ENCODE measurements at regions of chr13 and their contacts with region 1.

Region 1: DNA sequence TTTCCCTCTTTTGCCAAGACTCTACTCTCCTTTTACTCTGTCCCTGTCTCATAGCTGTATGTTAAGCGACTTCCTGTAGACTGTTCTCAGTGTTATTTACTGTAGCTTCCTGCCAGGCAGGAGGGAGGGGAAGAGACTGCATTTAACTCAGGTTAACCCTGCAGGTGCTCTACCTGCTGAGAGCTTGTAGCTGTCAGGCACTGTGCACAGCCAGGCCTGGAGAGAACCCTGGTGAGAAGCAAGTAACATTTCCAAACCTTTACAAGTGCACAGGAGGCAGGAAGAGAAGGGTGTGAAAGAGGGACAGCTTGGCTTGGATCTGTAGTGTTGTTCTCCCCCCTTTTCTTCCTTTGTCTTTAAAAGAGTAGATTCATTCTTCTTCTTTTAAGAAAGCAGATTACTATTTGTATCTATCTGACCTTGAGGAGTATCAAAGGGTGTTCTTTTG is 167.1 kb downstream of the LMO7 start:
- DNase-seq: no peak
- H3K4me3 Mint-ChIP-seq: no peak overlapping the region
- H3K27ac Mint-ChIP-seq: peak overlapping the region; percentile 2
- H3K4me1 Mint-ChIP-seq: peaks cover 41% of the 10 kb centered on the region
- H3K27me3 Mint-ChIP-seq: no peaks in the 10 kb centered on the region

Region 2: DNA sequence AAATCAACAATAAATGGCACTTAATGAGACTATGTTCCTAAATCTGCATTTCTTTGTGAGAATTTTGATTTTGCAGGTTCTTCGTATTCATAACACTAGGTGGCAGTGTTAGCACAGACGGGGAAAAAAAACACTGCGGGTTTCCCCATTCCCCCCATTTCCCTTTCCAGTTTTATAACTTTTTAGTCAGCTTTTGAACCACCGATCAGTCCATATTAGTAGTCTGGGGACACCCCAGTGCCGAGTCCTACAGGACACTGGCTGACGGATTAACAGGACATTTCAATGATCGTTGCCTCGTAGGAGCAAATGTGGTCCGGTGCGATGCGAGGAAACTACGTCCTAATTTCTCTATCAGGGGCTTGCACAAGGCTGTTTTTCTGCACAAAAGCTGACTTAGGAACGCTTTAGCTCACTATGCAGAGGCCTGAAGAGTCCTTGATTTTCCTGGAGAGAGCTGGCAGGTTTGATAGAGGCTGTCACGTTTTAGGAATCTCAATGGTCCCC is 67.3 kb after region 1 on chr13:
- intact Hi-C with region 1: loop called (anchors 5 kb)
- DNase-seq: no peak
- H3K4me3 Mint-ChIP-seq: peak overlapping the region; percentile 53
- H3K27ac Mint-ChIP-seq: no peak overlapping the region
- H3K4me1 Mint-ChIP-seq: peaks cover 18% of the 10 kb centered on the region
- H3K27me3 Mint-ChIP-seq: peaks cover 3% of the 10 kb centered on the region

Measured in activated T-helper 1 cell treated with anti-CD3 and anti-CD28 coated beads, Interleukin-12 subunit alpha, Interleukin-12 subunit beta, Interleukin-2, Interleukin-4 antibody, amounts not matched to agents 30 ng/mL and 10 ng/mL and 1 ng/mL, durations not matched to agents 14 hours and 24 hours and 36 hours (primary cell).